ENCODE measurements at regions of chr2 and their contacts with region 1.

Region 1: DNA sequence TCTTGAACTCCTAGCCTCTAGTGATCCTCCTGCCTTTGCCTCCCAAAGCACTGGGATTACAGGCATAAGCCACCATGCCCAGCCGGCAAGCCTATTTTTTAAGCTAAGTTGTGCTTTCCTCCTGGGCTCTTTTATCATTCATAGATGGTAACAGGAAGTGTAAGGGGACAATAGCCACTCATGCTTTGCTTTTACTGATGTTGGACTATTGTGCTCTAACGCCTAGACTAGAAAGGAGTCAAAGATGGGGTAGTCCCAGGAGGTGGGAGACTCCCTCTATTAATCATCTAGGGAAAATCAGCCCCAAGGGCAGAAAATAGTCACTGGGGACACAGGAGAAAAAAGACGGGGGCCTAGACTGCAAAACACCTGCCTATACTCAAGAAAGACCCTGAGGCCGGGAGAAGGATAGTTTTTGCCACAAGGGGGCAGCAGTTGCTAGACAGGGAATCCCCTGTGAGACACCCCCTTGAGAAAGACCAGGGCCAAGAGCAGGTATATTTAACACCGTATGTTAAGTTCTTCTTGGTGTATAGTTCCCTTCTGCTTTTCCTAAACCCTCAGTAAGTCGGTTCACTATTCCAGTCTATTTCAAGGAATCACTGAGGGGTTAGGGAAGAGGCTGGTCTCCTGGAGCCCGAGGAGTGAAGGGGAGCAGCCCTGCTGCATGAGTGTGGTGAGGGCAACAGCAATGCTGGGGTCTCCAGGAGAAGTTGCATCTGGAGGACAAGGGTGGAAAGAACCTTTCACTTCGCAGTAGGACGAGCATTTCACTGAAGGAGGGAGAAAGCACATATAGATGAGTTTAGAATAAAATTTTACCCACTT is 2.1 kb upstream of the CXCR1 start:
- DNase-seq: peak; percentile 28 to 62 (median 52)
- ATAC-seq: peak; percentile 69
- H3K4me3 ChIP-seq: no peak overlapping the region
- H3K4me3 Mint-ChIP-seq: peak overlapping the region in 3 of 10 donors; percentile 7 to 34 (median 21)
- H3K27ac ChIP-seq: no peak overlapping the region
- H3K27ac Mint-ChIP-seq: peak overlapping the region in 2 of 9 donors; percentile 19 to 37
- H3K4me1 ChIP-seq: peaks cover 19 to 26% of the 10 kb centered on the region in 2 donors
- H3K4me1 Mint-ChIP-seq: peaks cover 28 to 41% (median 38%) of the 10 kb centered on the region in 7 donors
- H3K27me3 ChIP-seq: no peaks in the 10 kb centered on the region
- H3K27me3 Mint-ChIP-seq: peaks cover 0 to 51% (median 6%) of the 10 kb centered on the region in 5 donors

Region 2: GRCh38 chr2:218257390-218257981 is 88.6 kb after region 1 on chr2:
- CTCF ChIA-PET with region 1: interaction called, 3 read pairs
- POLR2A ChIA-PET with region 1: no interaction called
- intact Hi-C with region 1: loop called (anchors 1 to 5 kb)
- DNase-seq: peak; percentile 39 to 67 (median 59)
- ATAC-seq: peak; percentile 85
- H3K4me3 ChIP-seq: no peak overlapping the region
- H3K4me3 Mint-ChIP-seq: peak overlapping the region; percentile 42 to 68 (median 52)
- H3K27ac ChIP-seq: peak overlapping the region; percentile 67
- H3K27ac Mint-ChIP-seq: peak overlapping the region; percentile 84 to 95 (median 92)
- H3K4me1 ChIP-seq: peaks cover 0 to 7% of the 10 kb centered on the region in 2 donors
- H3K4me1 Mint-ChIP-seq: peaks cover 7 to 23% (median 17%) of the 10 kb centered on the region in 7 donors
- H3K27me3 ChIP-seq: no peaks in the 10 kb centered on the region
- H3K27me3 Mint-ChIP-seq: no peaks in the 10 kb centered on the region

Measured in naive thymus-derived CD4-positive, alpha-beta T cell (primary cell).